PC-9 (cell line): ENCODE measurements at regions of chr1 and their contacts with region 1.

Region 1: DNA sequence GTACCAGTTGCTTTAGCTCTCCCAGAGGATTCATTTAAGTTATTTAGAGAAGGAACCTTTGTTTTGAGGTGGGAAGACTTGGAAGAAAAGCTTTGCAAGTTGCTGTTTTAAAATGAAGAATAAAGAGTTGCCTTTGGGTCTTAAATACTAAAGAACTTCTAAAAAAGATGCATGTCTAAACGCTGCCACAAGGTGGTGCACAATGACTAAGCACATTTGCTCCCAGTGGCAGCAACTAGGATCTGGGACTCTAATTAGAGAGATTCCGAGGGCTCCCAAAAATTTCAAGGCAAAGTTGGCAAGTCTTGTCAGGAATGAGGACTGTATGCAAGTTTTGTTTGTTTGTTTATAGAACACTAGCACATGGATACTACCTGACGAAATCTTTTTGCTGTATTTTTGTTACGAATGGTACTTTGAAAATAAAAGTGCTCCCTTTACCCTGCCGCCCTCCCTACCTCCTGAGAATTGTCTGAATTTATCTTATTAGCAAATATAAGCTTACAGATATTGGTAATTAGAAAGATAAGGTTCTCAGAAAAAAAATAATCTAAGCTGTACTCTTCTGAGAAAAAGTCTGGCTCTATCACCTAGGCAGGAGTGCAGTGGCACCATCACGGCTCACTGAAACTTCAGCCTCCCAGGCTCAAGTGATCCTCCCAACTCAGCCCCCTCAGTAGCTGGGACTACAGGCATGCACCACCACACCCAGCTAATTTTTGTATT is 121.8 kb downstream of the HFM1 start:
- DNase-seq: peak; percentile 37 to 66
- H3K4me3 ChIP-seq: no peak overlapping the region
- H3K27ac ChIP-seq: no peak overlapping the region
- H3K4me1 ChIP-seq: no peaks in the 10 kb centered on the region
- H3K27me3 ChIP-seq: no peaks in the 10 kb centered on the region
- CTCF ChIP-seq: peak; percentile 97

Region 2: DNA sequence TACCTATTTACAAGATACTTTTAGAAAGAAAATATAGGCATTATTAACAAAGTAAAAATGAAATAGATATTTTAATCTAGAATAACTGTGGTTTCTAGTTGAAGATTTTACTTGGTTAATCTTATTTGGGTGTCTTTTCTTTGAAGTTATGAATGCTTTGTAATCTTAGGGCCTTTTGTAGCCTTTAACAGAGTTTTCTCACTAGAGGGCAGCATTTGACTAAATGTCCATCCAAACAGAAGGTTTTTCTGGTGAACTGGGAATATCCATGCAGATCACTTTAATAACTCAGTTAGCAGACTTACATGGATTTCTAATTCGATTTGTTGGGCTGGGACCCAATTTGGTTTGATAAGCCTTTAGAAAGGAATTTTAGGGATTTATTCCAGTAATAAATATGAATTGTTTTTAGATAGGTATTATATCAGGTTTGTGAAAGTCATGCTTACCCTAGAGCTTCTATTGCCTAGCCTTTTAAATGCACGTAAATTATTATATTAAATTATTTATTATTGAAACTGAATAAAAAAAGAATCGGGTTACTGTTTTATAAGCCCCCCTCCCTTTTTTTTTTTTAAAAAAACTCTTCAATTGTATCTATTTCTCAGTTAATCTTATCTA is 1168.2 kb before region 1 on chr1:
- CTCF ChIA-PET with region 1: no interaction called
- POLR2A ChIA-PET with region 1: no interaction called
- intact Hi-C with region 1: loop called (anchors 2 kb)
- DNase-seq: peak in 1 of 2 experiments; percentile 54
- H3K4me3 ChIP-seq: no peak overlapping the region
- H3K27ac ChIP-seq: no peak overlapping the region
- H3K4me1 ChIP-seq: no peaks in the 10 kb centered on the region
- H3K27me3 ChIP-seq: no peaks in the 10 kb centered on the region
- CTCF ChIP-seq: peak; percentile 95

Region 3: GRCh38 chr1:90721210-90722194 is 561.4 kb before region 1 on chr1:
- CTCF ChIA-PET with region 1: no interaction called
- POLR2A ChIA-PET with region 1: no interaction called
- intact Hi-C with region 1: loop called (anchors 10 kb)
- DNase-seq: peak; percentile 52 to 71
- H3K4me3 ChIP-seq: peak overlapping the region; percentile 20; the same call in 1 of the 2 replicates
- H3K27ac ChIP-seq: no peak overlapping the region
- H3K4me1 ChIP-seq: no peaks in the 10 kb centered on the region
- H3K27me3 ChIP-seq: no peaks in the 10 kb centered on the region
- CTCF ChIP-seq: peak; percentile 99

Region 4: DNA sequence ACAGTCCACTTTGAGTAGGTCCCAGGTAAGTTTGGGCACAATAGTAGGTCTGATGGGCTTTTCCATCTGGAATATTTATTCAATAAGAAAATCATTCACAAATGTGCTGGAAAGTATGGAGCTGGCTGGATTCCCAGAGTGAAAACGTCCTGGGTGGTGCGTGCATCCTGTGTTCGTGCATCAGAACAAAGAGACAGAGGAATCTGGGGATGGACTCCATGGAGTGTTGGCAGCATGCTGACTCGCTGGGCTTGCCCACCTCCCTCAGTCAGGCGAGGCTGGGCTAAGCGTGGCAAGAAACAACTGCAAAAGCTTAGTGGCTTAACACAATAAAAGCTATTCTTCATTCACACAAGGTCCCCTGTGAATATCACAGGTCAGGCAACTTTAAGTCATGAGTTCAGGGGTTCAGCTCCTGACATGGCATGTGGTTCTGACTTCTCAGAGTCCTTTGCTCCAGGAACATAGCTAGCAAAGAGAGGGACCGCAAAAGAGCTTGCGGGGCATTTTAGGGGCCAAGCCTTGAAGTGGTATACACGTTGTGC is 109.4 kb before region 1 on chr1:
- CTCF ChIA-PET with region 1: no interaction called
- POLR2A ChIA-PET with region 1: no interaction called
- intact Hi-C with region 1: no loop called
- DNase-seq: no peak
- H3K4me3 ChIP-seq: no peak overlapping the region
- H3K27ac ChIP-seq: no peak overlapping the region
- H3K4me1 ChIP-seq: no peaks in the 10 kb centered on the region
- H3K27me3 ChIP-seq: peaks cover 8% of the 10 kb centered on the region; the same call in 1 of the 2 replicates
- CTCF ChIP-seq: no peak

Region 5: GRCh38 chr1:91404151-91405012 is 121.5 kb after region 1 on chr1 and contains the start of gene HFM1:
- CTCF ChIA-PET with region 1: no interaction called
- POLR2A ChIA-PET with region 1: no interaction called
- intact Hi-C with region 1: loop called (anchors 2 kb)
- DNase-seq: peak; percentile 27 to 50
- H3K4me3 ChIP-seq: peak within 1 kb of the TSS; percentile 73
- H3K27ac ChIP-seq: no peak within 1 kb of the TSS
- H3K4me1 ChIP-seq: no peaks in the 10 kb centered on the region; the same call in 1 of the 2 replicates
- H3K27me3 ChIP-seq: no peaks in the 10 kb centered on the region
- CTCF ChIP-seq: no peak
- total RNA-seq, gene HFM1: not detected in 2 replicates

Region 6: DNA sequence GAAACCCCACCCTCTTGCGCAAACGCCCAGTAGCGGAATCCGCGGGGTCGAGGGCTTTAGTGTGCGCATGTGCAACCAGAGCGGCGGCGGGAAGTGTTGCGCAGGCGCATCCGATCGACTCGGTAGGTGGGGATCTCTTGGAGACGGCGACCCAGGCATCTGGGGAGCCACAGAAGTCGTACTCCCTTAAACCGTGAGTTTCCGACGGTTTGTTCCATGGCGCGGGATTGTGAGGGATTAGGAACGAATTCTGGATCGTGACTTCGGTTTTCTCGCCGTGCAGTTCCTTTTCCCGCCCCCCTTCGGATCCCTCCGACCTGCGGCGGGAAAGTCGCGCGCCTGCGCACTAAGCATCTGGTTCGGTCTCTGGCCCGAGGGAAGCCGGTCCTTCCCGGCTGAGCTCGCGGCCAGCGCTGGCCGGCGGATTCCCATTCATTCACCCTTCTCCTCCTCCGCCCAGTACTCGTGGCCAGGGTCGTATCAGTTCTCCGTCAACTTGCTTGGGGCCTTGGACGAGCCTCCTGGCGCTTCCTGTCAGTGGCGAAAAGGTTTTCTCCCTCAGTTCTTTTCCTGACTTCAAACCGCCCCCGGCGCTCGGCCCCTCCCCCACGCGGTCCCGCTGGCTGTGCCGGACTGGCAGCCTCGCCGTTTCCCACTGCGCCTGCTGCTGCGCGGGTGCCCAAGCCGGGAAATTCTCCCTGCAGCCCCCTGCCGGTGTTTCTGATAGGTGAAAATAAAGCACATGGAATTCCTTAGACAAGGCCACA is 218.1 kb after region 1 on chr1 and contains the start of gene CDC7:
- CTCF ChIA-PET with region 1: no interaction called
- POLR2A ChIA-PET with region 1: no interaction called
- intact Hi-C with region 1: loop called (anchors 5 kb)
- DNase-seq: peak; percentile 78 to 87
- H3K4me3 ChIP-seq: peak within 1 kb of the TSS; percentile 70
- H3K27ac ChIP-seq: peak within 1 kb of the TSS; percentile 56
- H3K4me1 ChIP-seq: peaks cover 23% of the 10 kb centered on the region
- H3K27me3 ChIP-seq: no peaks in the 10 kb centered on the region
- CTCF ChIP-seq: peak; percentile 82
- total RNA-seq, gene CDC7: 11.5 and 13.1 TPM in 2 replicates

Region 7: DNA sequence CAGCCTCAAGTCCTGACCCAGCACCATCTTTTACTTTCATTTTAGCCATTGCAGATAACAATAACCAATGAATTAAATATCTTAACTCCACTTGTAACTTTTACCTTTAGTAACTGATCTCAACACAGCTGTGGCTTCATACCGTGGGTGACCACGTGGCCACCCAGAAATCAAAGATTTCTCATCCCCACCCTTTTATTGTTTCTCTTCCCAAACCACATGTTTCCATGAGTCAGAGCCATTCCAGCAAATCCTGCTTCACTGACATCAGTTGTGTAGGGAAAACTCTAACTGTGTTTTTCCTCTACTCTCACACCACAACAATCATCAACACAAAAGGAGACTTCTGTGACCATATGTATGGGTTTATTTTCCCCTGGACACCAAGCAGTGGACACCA is 641.3 kb after region 1 on chr1:
- CTCF ChIA-PET with region 1: no interaction called
- POLR2A ChIA-PET with region 1: no interaction called
- intact Hi-C with region 1: loop called (anchors 2 kb)
- DNase-seq: no peak
- H3K4me3 ChIP-seq: no peak overlapping the region
- H3K27ac ChIP-seq: no peak overlapping the region
- H3K4me1 ChIP-seq: peaks cover 13% of the 10 kb centered on the region
- H3K27me3 ChIP-seq: no peaks in the 10 kb centered on the region
- CTCF ChIP-seq: no peak

Region 8: GRCh38 chr1:92291372-92291999 is 1008.6 kb after region 1 on chr1:
- CTCF ChIA-PET with region 1: no interaction called
- POLR2A ChIA-PET with region 1: no interaction called
- intact Hi-C with region 1: loop called (anchors 5 kb)
- DNase-seq: peak; percentile 9 to 59
- H3K4me3 ChIP-seq: no peak overlapping the region
- H3K27ac ChIP-seq: no peak overlapping the region
- H3K4me1 ChIP-seq: no peaks in the 10 kb centered on the region
- H3K27me3 ChIP-seq: no peaks in the 10 kb centered on the region
- CTCF ChIP-seq: peak; percentile 89